ENCODE measurements at regions of chr21 and their contacts with region 1.

Region 1: GRCh38 chr21:36028127-36029069 is 31.9 kb downstream of the SETD4 start:
- DNase-seq: no peak
- H3K4me3 ChIP-seq: peak overlapping the region; percentile 12; the same call in 1 of the 2 replicates
- CTCF ChIP-seq: peak; percentile 91

Region 2: DNA sequence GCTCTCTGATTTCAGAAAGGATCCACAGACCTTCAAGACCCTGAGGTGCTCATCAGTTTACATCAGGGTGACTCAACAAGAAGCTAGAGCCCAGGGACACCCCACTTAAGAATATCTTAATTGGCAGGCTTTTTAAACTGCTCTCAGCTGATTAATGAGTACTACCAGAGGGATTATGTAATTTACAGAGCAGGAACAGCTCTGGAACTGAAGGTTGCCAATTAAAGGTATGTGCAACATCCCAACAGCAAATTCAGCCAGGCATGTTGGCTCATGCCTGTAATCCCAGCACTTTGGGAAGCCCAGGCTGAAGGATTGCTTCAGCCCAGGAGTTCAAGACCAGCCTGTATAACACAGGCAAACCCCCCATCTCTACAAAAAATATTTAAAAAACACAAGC is 263.8 kb before region 1 on chr21:
- CTCF ChIA-PET with region 1: no interaction called
- POLR2A ChIA-PET with region 1: no interaction called
- DNase-seq: no peak
- H3K4me3 ChIP-seq: no peak overlapping the region
- CTCF ChIP-seq: no peak

Region 3: GRCh38 chr21:36038701-36039497 is 10.5 kb after region 1 on chr21:
- CTCF ChIA-PET with region 1: interaction called, 11 read pairs
- POLR2A ChIA-PET with region 1: no interaction called
- DNase-seq: no peak
- H3K4me3 ChIP-seq: no peak overlapping the region
- CTCF ChIP-seq: no peak